OCI-LY7 (cell line): ENCODE measurements at regions of chr1 and their contacts with region 1.

Region 1: DNA sequence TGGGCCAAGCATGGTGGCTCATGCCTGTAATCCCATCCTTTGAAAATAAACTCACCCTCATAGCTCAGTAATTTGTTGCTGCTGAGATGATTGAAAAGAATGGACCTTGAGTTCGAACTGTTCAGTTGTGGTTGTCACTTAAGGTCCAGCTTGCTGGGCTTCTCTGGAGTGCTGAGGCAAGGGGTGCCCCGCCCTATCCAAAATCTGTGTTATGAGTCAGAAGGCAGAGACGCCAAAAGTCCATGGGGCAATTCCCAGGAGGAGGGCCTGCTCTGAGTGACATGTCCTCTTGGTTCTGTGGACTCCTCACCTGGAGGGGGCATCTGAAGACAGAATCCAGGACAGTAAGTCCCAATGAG is 64.9 kb downstream of the MYOM3 start:
- DNase-seq: no peak
- H3K4me3 ChIP-seq: no peak overlapping the region
- H3K27ac ChIP-seq: no peak overlapping the region
- H3K4me1 ChIP-seq: no peaks in the 10 kb centered on the region
- CTCF ChIP-seq: no peak

Region 2: GRCh38 chr1:24443241-24443656 is 396.2 kb after region 1 on chr1:
- CTCF ChIA-PET with region 1: no interaction called
- POLR2A ChIA-PET with region 1: interaction called, 10 read pairs
- intact Hi-C with region 1: no loop called
- DNase-seq: no peak
- H3K4me3 ChIP-seq: no peak overlapping the region
- H3K27ac ChIP-seq: no peak overlapping the region
- H3K4me1 ChIP-seq: no peaks in the 10 kb centered on the region
- CTCF ChIP-seq: no peak